ENCODE measurements at regions of chr2 and their contacts with region 1.

Region 1: DNA sequence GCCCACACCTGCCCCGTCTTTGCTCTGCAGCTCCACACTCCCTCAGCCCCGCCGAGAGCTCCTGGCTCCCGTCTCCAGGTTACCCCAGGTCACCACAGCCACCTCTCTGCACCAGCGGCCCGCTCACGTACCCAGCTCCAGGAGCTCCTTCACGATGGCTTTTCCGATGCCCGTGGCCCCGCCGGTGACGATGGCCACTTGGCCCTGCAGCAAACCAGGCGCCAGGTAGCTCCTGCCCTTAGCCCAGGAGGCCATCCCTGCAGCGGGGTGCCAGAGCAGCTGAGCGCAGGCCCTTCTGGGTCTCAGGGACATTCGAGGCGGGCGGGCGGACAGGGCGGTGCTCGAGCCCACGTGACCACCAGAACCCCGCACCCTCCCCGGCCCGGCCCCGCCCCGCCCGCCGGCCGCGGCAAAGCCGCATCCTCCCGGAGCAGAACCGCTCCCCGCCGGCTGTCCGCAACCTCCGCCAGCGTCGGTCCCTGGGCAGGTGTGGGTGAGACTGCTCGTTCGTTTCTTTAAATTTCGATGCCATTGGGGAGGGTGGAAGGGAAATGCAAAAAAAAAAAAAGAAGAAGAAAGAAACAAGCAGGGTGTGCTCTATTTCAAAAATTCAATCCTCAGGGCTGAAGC is at the starts of genes PECR and TMEM169:
- DNase-seq: peak; percentile 86
- ATAC-seq: peak; percentile 95
- H3K4me3 Mint-ChIP-seq: peak within 1 kb of the TSS; percentile 92
- H3K27ac Mint-ChIP-seq: peak within 1 kb of the TSS; percentile 83
- H3K4me1 Mint-ChIP-seq: peaks cover 54% of the 10 kb centered on the region
- H3K27me3 Mint-ChIP-seq: no peaks in the 10 kb centered on the region
- total RNA-seq, gene PECR: 29.0 to 30.3 TPM
- total RNA-seq, gene TMEM169: 1.2 to 1.4 TPM

Region 2: DNA sequence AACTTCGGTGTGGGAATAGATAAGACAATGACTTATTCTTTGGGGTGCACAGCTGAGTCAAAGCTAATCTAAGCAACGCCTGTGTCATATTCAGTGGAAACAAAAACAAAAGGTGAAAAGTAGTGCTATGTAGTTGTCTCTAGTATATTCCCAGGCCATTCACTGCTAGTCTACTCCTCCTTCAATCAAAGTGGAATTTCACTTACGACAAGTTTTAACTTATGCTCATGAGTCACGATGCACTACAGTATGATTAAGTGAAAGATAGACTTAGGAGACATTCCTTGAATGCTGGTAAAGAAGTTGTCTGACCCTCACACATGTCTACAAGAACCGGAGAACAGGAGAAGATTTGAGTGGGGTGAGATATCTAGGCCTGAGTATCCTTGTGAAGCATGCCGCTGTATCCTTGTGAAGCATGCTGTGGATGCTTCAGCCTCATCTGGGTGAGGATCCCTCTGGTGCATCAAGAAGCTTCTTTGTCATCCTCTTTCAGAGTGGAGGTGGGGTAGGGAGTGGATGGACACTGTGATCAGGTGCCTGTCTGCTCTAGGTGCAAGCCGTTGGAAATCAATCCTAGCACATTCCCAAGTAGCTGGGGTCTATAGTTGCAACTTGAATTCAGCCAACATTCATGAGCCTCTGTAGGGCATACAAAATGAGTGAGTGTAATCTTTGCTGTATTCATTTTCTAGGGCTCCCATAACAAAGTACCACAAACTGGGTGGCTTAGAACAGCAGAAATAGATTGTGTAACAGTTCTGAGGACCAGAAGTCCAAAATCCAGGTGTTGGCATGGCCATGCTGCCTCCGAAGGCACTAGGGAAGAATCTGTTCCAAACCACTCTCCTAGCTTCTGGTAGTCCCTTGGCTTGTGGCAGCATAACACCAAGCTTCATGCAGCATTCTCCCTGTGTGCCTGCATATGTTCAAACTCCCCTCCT is 472.2 kb before region 1 on chr2:
- CTCF ChIA-PET with region 1: no interaction called
- POLR2A ChIA-PET with region 1: no interaction called
- DNase-seq: no peak
- ATAC-seq: no peak
- H3K4me3 Mint-ChIP-seq: no peak overlapping the region
- H3K27ac Mint-ChIP-seq: no peak overlapping the region
- H3K4me1 Mint-ChIP-seq: no peaks in the 10 kb centered on the region
- H3K27me3 Mint-ChIP-seq: peaks cover 1% of the 10 kb centered on the region

Region 3: DNA sequence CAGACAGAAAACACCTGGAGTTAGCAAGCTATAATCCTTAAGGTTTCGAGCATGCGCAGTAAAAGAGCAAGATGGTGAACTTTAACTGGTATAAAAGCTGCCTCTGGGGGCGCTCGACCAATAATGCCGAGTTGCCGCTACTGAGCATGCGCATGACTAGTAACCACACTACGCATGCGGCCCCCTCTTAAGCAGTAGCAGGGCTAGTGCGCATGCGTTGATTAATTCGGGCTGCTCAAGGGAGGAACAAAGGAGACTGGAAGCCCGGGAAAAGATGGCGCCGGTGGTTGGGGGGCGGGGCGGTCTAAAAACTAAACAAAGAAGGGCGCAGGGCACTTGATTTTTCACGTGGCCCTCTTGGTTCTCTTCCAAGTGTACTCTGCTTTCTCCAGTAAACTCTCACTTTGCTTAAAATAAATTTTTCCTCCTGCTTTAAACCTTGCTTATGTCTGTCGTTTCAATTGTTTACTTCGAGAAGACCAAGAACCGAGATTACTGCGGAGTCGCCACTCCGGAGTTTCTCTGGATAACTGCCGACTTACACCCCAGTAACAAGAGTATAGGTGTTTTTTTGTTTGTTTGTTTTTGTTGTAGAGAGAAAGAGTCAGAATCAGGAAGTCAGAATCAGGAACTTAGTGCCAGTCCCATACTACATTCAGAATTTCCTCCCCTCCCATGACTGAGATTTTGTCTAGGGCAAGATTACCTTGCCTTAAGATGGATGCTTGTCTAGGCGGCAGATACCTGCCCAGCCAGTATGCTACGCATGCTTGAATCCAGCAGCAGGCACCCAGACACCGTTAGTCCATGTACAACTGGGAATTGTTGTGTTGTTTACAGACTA is 33.3 kb after region 1 on chr2:
- CTCF ChIA-PET with region 1: interaction called, 76 read pairs
- POLR2A ChIA-PET with region 1: interaction called, 13 read pairs
- DNase-seq: peak; percentile 99
- ATAC-seq: peak; percentile 91
- H3K4me3 Mint-ChIP-seq: peak overlapping the region; percentile 84
- H3K27ac Mint-ChIP-seq: peak overlapping the region; percentile 86
- H3K4me1 Mint-ChIP-seq: peaks cover 94% of the 10 kb centered on the region
- H3K27me3 Mint-ChIP-seq: no peaks in the 10 kb centered on the region